ENCODE measurements at regions of chr22 and their contacts with region 1.

Region 1: DNA sequence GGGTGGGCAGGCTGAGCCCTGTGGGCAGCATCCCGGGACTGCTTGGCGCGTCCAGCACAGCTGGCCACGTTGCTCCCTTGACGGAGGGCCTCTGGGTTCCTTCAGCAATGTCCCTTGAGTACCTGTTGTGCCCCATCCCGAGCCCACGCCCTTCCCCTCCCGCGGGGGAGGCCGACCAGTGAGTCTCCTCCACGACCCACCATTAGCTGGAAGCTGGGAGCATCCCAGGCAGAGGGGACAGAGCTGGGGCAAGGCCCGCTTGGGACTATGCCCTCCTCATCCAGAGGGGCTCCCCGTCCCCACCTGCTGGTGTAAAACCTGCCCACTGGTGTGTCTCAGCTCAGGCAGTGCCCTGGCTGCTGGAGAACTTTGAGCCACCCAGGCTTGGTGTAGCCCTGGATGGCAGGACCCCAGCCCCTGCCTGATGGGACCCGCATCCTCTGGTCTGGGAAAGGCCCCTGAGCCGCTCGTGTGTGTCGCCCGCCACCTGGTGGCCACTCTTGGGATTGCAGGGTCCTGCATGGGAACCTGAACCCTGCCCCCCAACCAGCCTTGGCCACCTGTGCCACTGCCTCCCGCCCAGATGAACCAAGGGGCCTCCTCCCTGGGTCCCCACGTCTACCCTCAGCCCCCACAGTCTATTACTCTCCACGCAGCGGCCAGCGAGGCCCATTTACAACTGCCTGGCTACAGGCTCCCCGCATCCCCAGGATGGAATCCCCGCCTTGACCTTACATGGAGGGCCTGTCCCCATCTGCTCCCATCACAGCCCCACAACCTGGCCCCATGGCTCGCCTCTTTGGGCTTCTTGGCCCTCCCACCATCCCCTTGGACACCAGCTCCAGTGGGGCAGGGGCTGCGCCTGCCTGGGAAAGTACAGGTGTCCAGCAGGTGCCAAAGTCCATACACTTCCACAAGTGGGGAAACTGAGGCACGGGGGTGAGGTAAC is 16.6 kb upstream of the ARHGAP8 start:
- DNase-seq: peak; percentile 95
- H3K4me3 Mint-ChIP-seq: no peak overlapping the region
- H3K27ac Mint-ChIP-seq: no peak overlapping the region
- H3K4me1 Mint-ChIP-seq: peaks cover 2% of the 10 kb centered on the region
- H3K27me3 Mint-ChIP-seq: no peaks in the 10 kb centered on the region

Region 2: DNA sequence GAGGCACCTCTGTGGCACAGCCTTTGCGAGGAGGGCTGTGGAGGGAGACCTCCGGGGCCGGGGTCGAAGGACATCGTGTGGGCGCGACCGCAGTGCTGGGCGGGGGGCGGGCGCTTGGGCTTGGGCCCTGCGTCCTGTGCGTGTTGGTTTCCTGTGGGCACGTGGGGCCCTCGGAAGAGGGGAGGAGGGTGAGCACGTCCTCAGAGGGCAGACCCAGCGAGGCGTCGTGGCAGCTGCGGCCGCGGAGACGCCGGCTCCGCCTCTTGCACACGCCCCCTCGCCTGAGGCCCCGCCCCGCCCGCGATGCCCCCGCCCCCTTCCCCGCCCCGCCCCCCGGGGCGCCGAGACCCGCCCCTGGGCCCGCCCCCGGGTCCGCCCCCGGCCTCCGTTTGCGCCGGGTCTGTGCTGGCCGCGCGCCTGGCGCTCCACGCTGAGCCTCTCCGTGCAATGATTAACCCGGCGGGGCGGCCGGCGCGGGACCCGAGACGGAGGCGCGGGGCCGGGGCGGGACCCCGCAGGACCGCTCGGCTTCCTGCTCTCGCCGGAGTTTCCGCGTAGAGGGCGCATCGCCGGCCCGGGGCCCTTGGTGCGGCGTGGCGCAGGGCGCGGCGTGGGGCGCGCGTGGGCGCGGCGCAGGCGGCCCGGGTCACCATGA is 33.9 kb before region 1 on chr22 and contains the start of gene PRR5:
- intact Hi-C with region 1: loop called (anchors 1 kb)
- DNase-seq: peak; percentile 94
- H3K4me3 Mint-ChIP-seq: peak within 1 kb of the TSS; percentile 75
- H3K27ac Mint-ChIP-seq: peak within 1 kb of the TSS; percentile 68
- H3K4me1 Mint-ChIP-seq: peaks cover 4% of the 10 kb centered on the region
- H3K27me3 Mint-ChIP-seq: peaks cover 3% of the 10 kb centered on the region
- total RNA-seq, gene PRR5: 22.7 and 23.6 TPM in 2 replicates